HCT116 (cell line): ENCODE measurements at regions of chr9 and their contacts with region 1.

Region 1: DNA sequence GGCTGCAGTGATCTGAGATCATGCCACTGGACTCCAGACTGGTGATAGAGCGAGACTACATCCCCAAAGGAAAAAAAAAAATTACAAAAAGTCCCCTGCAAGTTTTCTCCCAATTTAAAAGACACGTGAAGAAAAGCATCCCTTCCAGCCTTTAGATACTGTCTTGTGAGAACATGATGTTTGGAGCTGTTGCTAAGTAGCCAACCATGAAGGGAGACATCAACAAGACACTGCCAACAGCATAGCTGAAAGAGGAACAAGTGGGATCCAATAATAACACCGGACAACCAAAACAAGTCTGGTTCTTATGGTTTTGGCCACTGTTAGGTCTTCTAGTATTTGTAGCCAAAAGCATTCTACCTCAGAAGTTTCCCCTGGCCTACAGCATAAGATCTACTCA is 118.9 kb upstream of the CCDC180 start:
- DNase-seq: no peak
- ATAC-seq: no peak
- H3K4me3 ChIP-seq: no peak overlapping the region
- H3K27ac ChIP-seq: no peak overlapping the region
- H3K4me1 ChIP-seq: no peaks in the 10 kb centered on the region
- H3K27me3 ChIP-seq: no peaks in the 10 kb centered on the region
- CTCF ChIP-seq: no peak
- POLR2A ChIP-seq: no peak
- RAD21 ChIP-seq: no peak

Region 2: DNA sequence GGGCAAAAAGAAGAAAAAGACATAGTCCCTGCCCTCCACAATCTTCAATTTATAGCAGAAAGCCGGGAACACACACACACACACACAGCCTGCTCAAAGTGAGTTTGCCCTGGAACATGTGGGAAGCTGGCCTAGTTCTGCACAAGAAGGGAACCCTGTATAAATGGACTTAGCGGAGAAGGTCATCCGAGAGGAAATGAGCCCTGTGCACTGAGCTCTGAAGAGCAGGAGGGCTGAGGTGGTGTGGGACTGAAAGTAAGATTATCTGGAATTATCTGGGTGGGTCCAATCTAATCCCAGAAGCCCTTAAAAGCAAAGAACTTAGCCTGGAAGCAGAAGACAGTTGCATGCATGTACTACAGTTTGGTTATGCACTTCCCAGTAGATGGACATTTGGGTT is 59.6 kb before region 1 on chr9:
- CTCF ChIA-PET with region 1: no interaction called
- POLR2A ChIA-PET with region 1: no interaction called
- RAD21 ChIA-PET with region 1: no interaction called
- intact Hi-C with region 1: loop called (anchors 10 kb)
- DNase-seq: no peak
- ATAC-seq: no peak
- H3K4me3 ChIP-seq: no peak overlapping the region
- H3K27ac ChIP-seq: no peak overlapping the region
- H3K4me1 ChIP-seq: no peaks in the 10 kb centered on the region
- H3K27me3 ChIP-seq: no peaks in the 10 kb centered on the region
- CTCF ChIP-seq: no peak
- POLR2A ChIP-seq: no peak
- RAD21 ChIP-seq: no peak